ENCODE measurements at regions of chr19 and their contacts with region 1.

Region 1: GRCh38 chr19:42450314-42450934 is 7.7 kb upstream of the CXCL17 start:
- DNase-seq: peak; percentile 97
- ATAC-seq: peak; percentile 87 to 91
- H3K4me3 ChIP-seq: no peak overlapping the region
- H3K27ac ChIP-seq: peak overlapping the region; percentile 1 to 12; a peak in 3 of 6 replicates
- H3K4me1 ChIP-seq: peaks cover 29% of the 10 kb centered on the region
- CTCF ChIP-seq: peak; percentile 100
- EP300 ChIP-seq: no peak
- POLR2A ChIP-seq: no peak
- RAD21 ChIP-seq: peak; percentile 100

Region 2: GRCh38 chr19:42409477-42409876 is 40.9 kb before region 1 on chr19:
- CTCF ChIA-PET with region 1: no interaction called
- POLR2A ChIA-PET with region 1: no interaction called
- DNase-seq: no peak
- ATAC-seq: no peak
- H3K4me3 ChIP-seq: no peak overlapping the region
- H3K27ac ChIP-seq: no peak overlapping the region
- H3K4me1 ChIP-seq: no peaks in the 10 kb centered on the region
- CTCF ChIP-seq: no peak
- EP300 ChIP-seq: no peak
- POLR2A ChIP-seq: no peak
- RAD21 ChIP-seq: no peak

Region 3: DNA sequence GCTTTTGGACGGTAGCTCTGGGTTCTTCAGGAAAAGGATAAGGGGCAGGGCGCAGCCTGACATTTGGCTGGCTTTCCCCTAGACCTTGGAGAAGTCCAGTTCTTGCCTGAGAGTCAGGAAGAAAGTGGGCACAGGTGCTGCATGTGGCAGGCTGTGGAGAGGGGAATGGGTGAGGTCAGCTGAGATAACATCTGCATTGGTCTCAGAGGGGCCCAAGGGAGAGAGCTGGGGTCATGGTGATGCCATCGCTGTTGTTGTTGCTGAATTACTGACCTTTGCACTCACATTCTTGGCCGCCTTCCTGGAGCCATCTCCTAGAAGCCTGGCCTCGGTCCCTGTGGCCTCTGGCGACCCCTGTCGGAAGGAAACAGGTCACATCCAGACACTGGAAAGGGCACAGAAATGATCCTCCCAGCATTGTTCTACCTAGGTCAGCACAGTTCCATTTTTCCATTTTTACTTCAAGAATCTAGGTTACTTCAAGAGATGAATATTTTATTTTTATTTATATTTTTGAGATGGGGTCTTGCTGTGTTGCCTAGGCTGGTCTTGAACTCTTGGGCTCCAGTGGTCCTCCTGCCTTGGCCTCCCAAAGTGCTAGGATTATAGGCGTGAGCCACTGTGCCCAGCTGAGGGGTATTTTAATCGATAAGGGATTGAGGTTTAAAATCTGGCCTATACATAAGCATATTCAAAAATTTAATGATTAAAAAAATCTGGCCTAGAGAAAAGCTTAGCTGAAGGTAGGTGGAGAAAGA is 16.7 kb before region 1 on chr19:
- CTCF ChIA-PET with region 1: interaction called, 126 read pairs
- POLR2A ChIA-PET with region 1: no interaction called
- DNase-seq: peak; percentile 90 to 91
- ATAC-seq: peak; percentile 91 to 96
- H3K4me3 ChIP-seq: no peak overlapping the region
- H3K27ac ChIP-seq: peak overlapping the region; percentile 58 to 75
- H3K4me1 ChIP-seq: peaks cover 21% of the 10 kb centered on the region
- CTCF ChIP-seq: peak; percentile 99
- EP300 ChIP-seq: no peak
- POLR2A ChIP-seq: no peak
- RAD21 ChIP-seq: peak; percentile 92 to 98

Region 4: DNA sequence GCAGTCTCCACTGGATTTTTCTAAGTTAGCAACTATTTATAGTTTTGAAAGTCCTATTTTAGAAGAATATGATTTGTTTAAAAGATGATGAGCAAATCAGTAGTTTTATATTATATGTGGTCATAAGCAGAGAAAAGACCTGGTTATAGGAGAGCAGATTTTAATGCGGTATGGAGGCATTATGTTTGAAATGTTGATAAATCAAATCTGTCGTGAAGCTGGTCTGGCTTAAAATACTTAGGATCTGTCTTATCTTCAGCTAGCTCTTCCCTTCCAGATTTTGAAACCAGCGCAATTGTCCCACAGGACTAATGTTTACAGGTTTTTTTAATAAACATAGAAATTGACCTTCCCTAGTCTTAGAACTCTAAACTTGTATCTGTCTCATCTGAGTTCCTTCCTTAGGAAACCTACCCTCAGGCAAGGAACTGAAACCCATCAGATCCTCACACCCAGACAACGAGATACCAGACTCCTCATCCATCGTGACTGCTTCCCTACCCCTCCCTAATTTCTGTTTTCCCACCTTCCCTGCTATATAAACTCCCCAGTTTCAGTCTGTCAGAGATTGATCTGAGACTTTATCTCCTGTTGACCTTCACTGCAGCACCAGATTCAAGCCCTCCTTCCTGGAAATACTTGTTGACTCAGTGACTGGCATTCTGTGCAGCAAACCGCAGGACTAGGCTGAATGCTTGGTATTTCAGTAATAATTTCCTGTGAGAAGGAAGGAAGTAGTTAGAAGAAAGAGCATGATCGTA is 30.1 kb after region 1 on chr19:
- CTCF ChIA-PET with region 1: interaction called, 92 read pairs
- POLR2A ChIA-PET with region 1: no interaction called
- DNase-seq: peak in 1 of 2 experiments; percentile 78
- ATAC-seq: peak; percentile 65 to 90
- H3K4me3 ChIP-seq: no peak overlapping the region
- H3K27ac ChIP-seq: peak overlapping the region; percentile 32 to 39
- H3K4me1 ChIP-seq: peaks cover 16% of the 10 kb centered on the region
- CTCF ChIP-seq: no peak
- EP300 ChIP-seq: no peak
- POLR2A ChIP-seq: no peak
- RAD21 ChIP-seq: no peak

Region 5: GRCh38 chr19:42508892-42509444 is 58.5 kb after region 1 on chr19:
- CTCF ChIA-PET with region 1: interaction called, 42 read pairs
- POLR2A ChIA-PET with region 1: no interaction called
- DNase-seq: no peak
- ATAC-seq: no peak
- H3K4me3 ChIP-seq: no peak overlapping the region
- H3K27ac ChIP-seq: no peak overlapping the region
- H3K4me1 ChIP-seq: no peaks in the 10 kb centered on the region
- CTCF ChIP-seq: no peak
- EP300 ChIP-seq: no peak
- POLR2A ChIP-seq: no peak
- RAD21 ChIP-seq: no peak

Region 6: DNA sequence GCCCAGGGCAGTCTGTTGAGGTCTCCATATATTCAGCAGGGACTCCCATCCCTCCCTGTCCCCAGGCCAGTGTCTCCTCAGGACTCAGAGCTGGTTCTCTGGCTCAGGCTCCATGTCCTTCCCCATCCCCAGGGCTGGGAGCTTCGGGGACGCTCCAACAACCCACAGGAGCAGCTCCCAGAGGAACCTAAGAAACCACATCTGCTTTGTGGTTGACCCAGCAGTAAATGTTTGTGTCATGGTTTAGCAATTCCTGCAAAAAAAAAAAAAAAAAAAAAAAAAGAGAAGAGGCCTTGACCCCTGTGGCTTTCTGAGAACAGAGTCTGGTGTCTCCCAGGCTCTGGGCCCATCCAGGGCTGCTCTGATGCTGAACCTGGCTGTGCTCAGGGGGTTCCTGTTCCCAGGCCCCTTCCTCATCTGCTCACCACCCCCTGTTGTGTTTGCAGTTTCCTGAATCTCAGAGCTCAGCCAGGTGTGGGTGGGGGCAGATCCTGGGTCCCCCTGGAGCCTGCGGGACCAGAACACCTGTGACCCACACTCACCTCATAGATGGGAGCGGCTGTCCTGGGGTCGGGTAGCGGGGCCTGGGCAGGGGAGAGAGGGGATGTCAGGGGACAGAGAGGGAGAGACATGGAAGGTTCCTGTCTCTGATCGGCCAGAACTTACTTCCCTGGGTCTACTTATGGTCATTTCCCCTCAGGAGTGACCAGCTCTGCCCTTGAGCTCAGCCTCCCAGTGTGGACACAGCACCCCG is 103.0 kb after region 1 on chr19:
- CTCF ChIA-PET with region 1: interaction called, 11 read pairs
- POLR2A ChIA-PET with region 1: no interaction called
- DNase-seq: no peak
- ATAC-seq: no peak; a peak in 1 of 6 replicates
- H3K4me3 ChIP-seq: no peak overlapping the region
- H3K27ac ChIP-seq: no peak overlapping the region
- H3K4me1 ChIP-seq: no peaks in the 10 kb centered on the region
- CTCF ChIP-seq: no peak
- EP300 ChIP-seq: no peak
- POLR2A ChIP-seq: no peak
- RAD21 ChIP-seq: no peak